Naive thymus-derived CD4-positive, alpha-beta T cell (primary cell): ENCODE measurements at regions of chr13 and their contacts with region 1.

Region 1: DNA sequence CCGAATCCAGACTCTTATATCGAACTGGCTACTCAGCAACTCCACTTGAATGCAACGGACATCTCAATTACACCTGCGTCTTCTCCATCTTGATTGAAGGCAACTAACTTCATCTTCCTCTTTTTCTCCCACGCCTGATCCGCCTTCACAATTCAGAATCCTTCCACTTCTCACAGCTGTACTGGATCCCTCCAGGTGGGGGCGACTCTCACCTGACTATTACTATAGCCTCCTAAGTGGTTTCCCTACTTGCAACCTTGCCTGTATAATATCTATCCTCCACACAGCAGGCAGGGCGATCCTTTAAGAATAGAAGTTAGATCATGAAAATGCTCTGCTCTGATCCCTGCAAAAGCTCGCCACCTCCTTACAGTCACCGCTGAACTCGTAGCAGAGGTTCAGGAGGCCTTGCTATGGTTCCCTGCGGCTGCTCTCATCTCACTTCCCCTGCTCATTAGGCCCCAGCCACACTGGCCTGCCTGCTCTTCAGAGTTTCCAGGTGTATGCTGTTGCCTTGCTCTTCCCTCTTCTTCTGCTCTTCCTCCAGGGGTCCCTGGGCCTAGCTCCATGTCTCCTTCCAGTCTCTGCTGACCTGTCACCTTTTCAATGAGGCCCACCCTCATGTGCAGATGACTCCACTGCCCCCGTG is 31.9 kb downstream of the RFXAP start:
- DNase-seq: no peak
- ATAC-seq: no peak
- H3K4me3 ChIP-seq: no peak overlapping the region
- H3K4me3 Mint-ChIP-seq: no peak overlapping the region
- H3K27ac ChIP-seq: no peak overlapping the region
- H3K27ac Mint-ChIP-seq: no peak overlapping the region
- H3K4me1 ChIP-seq: no peaks in the 10 kb centered on the region
- H3K4me1 Mint-ChIP-seq: no peaks in the 10 kb centered on the region
- H3K27me3 ChIP-seq: no peaks in the 10 kb centered on the region
- H3K27me3 Mint-ChIP-seq: peaks cover 0 to 23% (median 15%) of the 10 kb centered on the region in 5 donors

Region 2: GRCh38 chr13:36666477-36667229 is 184.3 kb before region 1 on chr13:
- CTCF ChIA-PET with region 1: no interaction called
- POLR2A ChIA-PET with region 1: no interaction called
- intact Hi-C with region 1: no loop called
- DNase-seq: no peak
- ATAC-seq: no peak
- H3K4me3 ChIP-seq: no peak overlapping the region
- H3K4me3 Mint-ChIP-seq: no peak overlapping the region
- H3K27ac ChIP-seq: no peak overlapping the region
- H3K27ac Mint-ChIP-seq: no peak overlapping the region
- H3K4me1 ChIP-seq: no peaks in the 10 kb centered on the region
- H3K4me1 Mint-ChIP-seq: no peaks in the 10 kb centered on the region
- H3K27me3 ChIP-seq: no peaks in the 10 kb centered on the region
- H3K27me3 Mint-ChIP-seq: peaks cover 4 to 14% (median 12%) of the 10 kb centered on the region in 5 donors

Region 3: DNA sequence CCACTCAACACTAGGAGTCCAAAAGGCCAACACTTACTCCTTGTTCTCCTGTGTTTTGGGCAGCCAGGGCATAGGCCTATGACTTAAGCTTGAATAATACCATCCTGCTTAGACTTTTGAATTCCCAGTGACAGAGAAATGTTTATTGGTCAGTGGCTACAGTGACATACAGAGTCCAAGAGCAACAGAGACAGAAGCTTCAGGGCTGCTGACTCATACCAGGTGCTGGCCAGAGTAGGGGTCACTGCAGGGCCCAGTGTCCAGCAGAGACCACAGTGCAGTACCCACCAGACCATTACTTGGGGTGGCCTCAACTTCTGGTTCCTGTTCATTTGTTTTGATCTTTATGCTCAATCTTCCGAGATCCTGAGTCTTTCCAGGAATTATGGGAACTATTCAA is 1830.0 kb after region 1 on chr13:
- CTCF ChIA-PET with region 1: no interaction called
- POLR2A ChIA-PET with region 1: no interaction called
- intact Hi-C with region 1: loop called in 1 of 2 experiments (anchors 5 kb)
- DNase-seq: no peak
- ATAC-seq: no peak
- H3K4me3 ChIP-seq: no peak overlapping the region
- H3K4me3 Mint-ChIP-seq: no peak overlapping the region
- H3K27ac ChIP-seq: no peak overlapping the region
- H3K27ac Mint-ChIP-seq: no peak overlapping the region
- H3K4me1 ChIP-seq: no peaks in the 10 kb centered on the region
- H3K4me1 Mint-ChIP-seq: peaks cover 0 to 3% (median 2%) of the 10 kb centered on the region in 7 donors
- H3K27me3 ChIP-seq: no peaks in the 10 kb centered on the region
- H3K27me3 Mint-ChIP-seq: peaks cover 5 to 30% (median 18%) of the 10 kb centered on the region in 5 donors